ENCODE measurements at regions of chr7 and their contacts with region 1.

Region 1: DNA sequence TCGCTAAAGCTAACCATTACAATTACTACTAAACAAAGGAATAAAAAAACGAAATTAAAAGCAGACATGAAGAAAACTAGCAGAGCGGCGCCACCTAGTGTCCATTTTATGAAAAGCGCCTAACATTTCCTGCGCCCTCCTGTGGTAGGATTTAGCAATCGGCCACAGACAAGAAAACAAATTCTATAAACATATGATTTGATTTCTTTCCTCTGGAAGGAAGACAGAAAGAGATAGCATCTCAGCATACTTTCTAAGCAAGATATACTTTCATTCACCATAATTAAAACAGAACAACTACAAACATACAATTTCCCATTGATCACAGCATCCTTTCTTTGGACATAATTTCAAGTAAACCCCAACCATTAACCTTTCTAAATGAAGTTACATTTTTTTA is 337.7 kb upstream of the NPVF start:
- DNase-seq: peak; percentile 81
- H3K4me3 ChIP-seq: no peak overlapping the region
- H3K27ac ChIP-seq: peak overlapping the region in 1 of 2 donors; percentile 32
- H3K4me1 ChIP-seq: no peaks in the 10 kb centered on the region
- H3K27me3 ChIP-seq: no peaks in the 10 kb centered on the region
- CTCF ChIP-seq: peak; percentile 100
- POLR2A ChIP-seq: no peak

Region 2: DNA sequence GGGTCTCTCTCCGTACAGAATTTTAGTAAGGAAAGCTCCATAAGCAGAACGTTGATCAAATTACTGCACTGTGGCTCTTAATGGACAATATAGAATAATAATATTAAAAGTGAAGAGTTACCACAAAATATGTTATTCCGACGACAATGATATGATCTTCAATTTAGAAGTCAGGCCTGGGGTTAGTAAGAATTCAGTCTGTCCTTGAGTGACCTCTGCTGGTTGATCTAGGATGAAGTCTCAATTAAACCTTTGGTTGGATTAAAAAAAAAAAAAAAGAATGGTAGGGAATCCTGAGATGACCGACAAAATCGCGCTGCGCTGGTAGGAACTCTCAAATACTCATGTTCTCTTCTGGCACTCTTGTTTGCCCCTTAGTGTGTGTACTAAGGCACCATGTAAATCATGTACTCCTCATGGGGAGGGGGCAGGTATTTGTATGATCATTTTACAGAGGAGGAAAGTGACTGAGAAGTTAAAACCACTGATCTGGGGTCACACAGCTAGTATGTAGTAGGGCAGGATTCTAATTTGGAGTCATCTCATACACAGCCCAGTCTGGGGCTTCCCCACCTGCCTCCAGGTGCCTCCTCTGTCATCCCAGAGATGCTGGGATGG is 176.4 kb before region 1 on chr7:
- intact Hi-C with region 1: loop called (anchors 5 kb)
- DNase-seq: peak; percentile 22
- H3K4me3 ChIP-seq: no peak overlapping the region
- H3K27ac ChIP-seq: no peak overlapping the region
- H3K4me1 ChIP-seq: peaks cover 14% of the 10 kb centered on the region
- H3K27me3 ChIP-seq: no peaks in the 10 kb centered on the region
- CTCF ChIP-seq: peak; percentile 38 to 52 (median 39)
- POLR2A ChIP-seq: no peak